ENCODE measurements at regions of chr5 and their contacts with region 1.

Region 1: DNA sequence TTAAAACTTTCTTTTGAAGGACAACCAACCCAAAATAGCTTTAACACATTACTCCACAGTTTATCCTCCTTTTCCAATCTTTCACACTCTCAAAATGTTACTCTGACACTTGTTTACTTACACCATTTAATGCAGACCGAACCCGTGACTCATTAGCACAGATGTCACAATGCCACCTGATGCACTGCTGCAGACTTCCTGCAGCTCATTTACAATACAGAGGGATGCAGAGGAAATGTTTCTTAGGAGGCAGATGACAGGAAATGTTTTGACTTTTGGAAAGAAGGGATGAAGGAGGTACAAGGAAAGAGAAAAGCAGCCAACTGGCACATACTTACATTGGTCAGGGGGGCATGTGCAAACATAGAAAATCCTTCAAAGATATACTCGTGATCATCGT is 39.0 kb downstream of the DROSHA start:
- DNase-seq: peak; percentile 93
- H3K4me3 ChIP-seq: no peak overlapping the region
- H3K27ac ChIP-seq: peak overlapping the region; percentile 74
- H3K4me1 ChIP-seq: peaks cover 23% of the 10 kb centered on the region
- H3K27me3 ChIP-seq: no peaks in the 10 kb centered on the region
- CTCF ChIP-seq: no peak
- POLR2A ChIP-seq: no peak

Region 2: DNA sequence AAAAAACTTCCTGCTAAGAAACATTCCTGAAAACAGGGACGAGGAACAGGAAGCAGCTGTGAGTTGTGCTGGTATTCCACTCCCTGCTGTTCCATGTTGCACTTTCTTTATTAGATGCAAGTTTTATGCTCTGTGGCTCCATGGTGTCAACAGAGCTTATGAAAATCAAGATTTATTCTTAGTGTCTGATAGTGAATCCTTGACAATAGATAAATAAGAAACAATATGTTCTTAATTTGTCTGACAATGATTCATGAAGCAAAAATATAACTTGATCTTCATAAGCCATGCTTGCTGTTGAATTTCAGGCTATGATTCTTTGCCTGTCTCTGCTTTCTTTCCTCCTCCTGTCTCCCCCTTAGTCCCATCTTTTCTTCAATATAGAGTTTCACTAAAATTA is 80.5 kb before region 1 on chr5:
- CTCF ChIA-PET with region 1: no interaction called
- POLR2A ChIA-PET with region 1: no interaction called
- dilution Hi-C with region 1: no loop called
- intact Hi-C with region 1: loop called (anchors 5 kb)
- DNase-seq: peak; percentile 81
- H3K4me3 ChIP-seq: no peak overlapping the region
- H3K27ac ChIP-seq: no peak overlapping the region
- H3K4me1 ChIP-seq: peaks cover 16% of the 10 kb centered on the region
- H3K27me3 ChIP-seq: no peaks in the 10 kb centered on the region
- CTCF ChIP-seq: no peak
- POLR2A ChIP-seq: no peak

Region 3: DNA sequence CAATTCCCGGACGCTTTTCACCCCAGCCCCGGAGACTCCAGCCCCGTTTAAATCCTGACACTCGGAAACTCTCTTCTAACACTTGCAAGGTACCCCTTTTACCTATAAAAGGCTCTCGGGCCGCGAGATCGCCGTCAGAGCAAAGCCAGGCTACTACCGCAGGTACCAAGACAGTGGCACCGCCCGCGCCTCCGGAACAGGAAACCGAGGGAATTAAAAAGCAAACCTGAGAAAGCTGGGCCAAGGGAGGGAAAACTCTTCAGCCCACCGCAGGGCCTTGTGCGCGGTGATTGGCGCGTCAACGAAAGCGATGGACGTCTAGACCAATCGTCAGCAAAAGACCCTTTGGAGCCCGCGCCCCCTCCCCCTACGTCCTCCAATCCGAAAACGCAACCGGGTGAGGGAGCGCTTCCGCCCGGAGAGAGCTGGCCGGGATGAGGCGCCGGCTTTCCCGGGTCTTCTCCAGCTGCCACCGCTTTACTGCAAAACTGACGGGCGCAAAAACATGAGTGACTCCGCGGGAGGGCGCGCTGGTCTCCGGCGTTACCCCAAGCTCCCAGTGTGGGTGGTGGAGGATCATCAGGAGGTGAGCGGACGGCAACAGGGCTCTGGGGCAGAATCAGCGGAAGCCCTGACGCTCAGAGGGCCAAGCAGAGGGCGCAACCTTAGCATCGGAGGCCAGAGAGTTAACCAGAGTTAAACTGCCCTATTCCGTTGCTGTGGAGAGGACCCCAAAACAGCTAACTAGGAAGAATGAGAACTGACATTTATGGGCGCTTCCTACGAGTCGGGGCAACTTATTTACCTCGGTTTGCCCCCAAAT is 39.2 kb after region 1 on chr5 and contains the starts of genes C5orf22 and DROSHA:
- CTCF ChIA-PET with region 1: no interaction called
- POLR2A ChIA-PET with region 1: no interaction called
- dilution Hi-C with region 1: no loop called
- intact Hi-C with region 1: loop called (anchors 1 kb)
- DNase-seq: peak; percentile 96
- H3K4me3 ChIP-seq: peak within 1 kb of the TSS; percentile 86 to 93 (median 88)
- H3K27ac ChIP-seq: peak within 1 kb of the TSS; percentile 64
- H3K4me1 ChIP-seq: peaks cover 14% of the 10 kb centered on the region
- H3K27me3 ChIP-seq: no peaks in the 10 kb centered on the region
- CTCF ChIP-seq: no peak
- POLR2A ChIP-seq: peak; percentile 59
- total RNA-seq, gene C5orf22: 27.5 and 27.6 TPM in 2 replicates
- total RNA-seq, gene DROSHA: 90.0 and 96.4 TPM in 2 replicates

Region 4: GRCh38 chr5:32098291-32098690 is 605.4 kb after region 1 on chr5:
- CTCF ChIA-PET with region 1: no interaction called
- POLR2A ChIA-PET with region 1: no interaction called
- dilution Hi-C with region 1: no loop called
- intact Hi-C with region 1: loop called (anchors 2 kb)
- DNase-seq: peak; percentile 96
- H3K4me3 ChIP-seq: peak overlapping the region in 1 of 3 experiments; percentile 43
- H3K27ac ChIP-seq: peak overlapping the region; percentile 96
- H3K4me1 ChIP-seq: peaks cover 45% of the 10 kb centered on the region
- H3K27me3 ChIP-seq: no peaks in the 10 kb centered on the region
- CTCF ChIP-seq: no peak
- POLR2A ChIP-seq: no peak